GM12878 (cell line): ENCODE measurements at regions of chr6 and their contacts with region 1.

Region 1: DNA sequence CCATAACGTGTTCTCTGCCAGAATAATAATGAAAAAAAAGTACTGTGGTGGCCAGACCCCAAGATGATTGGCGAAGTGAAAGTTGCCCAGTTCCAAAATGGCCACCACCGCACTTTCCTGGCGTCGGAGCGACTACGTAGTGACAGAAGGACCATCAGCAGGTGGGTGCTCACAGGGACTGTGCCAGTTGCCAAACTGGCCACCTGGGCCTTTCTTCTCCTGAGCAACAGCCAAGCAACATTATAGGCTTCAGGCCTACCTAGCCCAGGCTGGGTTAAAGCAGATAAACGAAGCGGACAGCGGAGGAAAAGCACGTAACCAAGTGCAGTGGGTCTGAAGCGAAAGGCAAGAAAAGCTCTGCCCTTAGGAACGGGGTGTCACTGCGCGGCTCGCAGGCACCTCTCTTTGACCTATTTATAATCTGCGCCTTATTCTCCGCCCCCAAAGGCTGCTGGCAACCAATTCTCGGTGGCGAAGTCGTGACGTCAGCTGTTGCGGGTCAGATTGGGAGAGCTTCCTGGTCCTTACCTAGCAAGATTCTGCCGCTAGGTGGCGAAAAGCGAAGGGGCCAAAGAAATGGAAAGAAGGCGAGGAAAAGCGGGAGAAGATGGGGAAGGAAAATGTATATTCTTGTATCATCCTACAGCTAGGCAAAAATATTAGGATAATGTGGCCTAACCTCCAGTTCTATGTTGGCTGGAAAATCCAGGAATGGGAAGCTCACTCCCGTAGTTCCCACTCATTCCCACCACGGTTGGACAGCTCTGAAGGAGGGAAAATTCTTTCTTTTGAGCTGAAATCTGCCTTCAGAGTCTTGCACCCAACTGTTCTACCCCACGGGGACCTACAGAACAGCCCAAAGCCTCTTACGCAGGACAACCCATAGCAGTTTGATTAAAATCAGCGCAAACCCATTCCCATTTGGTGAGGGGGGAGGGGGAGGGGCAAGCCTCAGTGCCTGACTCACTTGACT is 6.9 kb upstream of the MOG start:
- DNase-seq: peak; percentile 89
- ATAC-seq: peak; percentile 97
- H3K4me3 ChIP-seq: peak overlapping the region; percentile 74
- H3K27ac ChIP-seq: peak overlapping the region; percentile 75
- H3K4me1 ChIP-seq: no peaks in the 10 kb centered on the region
- H3K27me3 ChIP-seq: no peaks in the 10 kb centered on the region
- CTCF ChIP-seq: peak; percentile 90 to 98 (median 96)
- EP300 ChIP-seq: peak in 1 of 2 experiments; percentile 17; a peak in 1 of 4 replicates
- POLR2A ChIP-seq: peak; percentile 91
- RAD21 ChIP-seq: 0 out of 2 replicates have a peak, but pooled peaks have one; percentile 19

Region 2: GRCh38 chr6:28838634-28839442 is 811.1 kb before region 1 on chr6:
- CTCF ChIA-PET with region 1: interaction called, 11 read pairs
- POLR2A ChIA-PET with region 1: no interaction called
- RAD21 ChIA-PET with region 1: no interaction called
- SMC1A ChIA-PET with region 1: interaction called, 3 read pairs
- in situ Hi-C with region 1: no loop called
- intact Hi-C with region 1: no loop called
- DNase-seq: peak; percentile 40
- ATAC-seq: peak; percentile 88
- H3K4me3 ChIP-seq: peak overlapping the region; percentile 70
- H3K27ac ChIP-seq: no peak overlapping the region
- H3K4me1 ChIP-seq: no peaks in the 10 kb centered on the region
- H3K27me3 ChIP-seq: peaks cover 0 to 2% of the 10 kb centered on the region in 2 experiments; a peak in 1 of 4 replicates
- CTCF ChIP-seq: peak; percentile 63 to 67 (median 66)
- EP300 ChIP-seq: no peak
- POLR2A ChIP-seq: no peak
- RAD21 ChIP-seq: 0 out of 2 replicates have a peak, but pooled peaks have one; percentile 15

Region 3: DNA sequence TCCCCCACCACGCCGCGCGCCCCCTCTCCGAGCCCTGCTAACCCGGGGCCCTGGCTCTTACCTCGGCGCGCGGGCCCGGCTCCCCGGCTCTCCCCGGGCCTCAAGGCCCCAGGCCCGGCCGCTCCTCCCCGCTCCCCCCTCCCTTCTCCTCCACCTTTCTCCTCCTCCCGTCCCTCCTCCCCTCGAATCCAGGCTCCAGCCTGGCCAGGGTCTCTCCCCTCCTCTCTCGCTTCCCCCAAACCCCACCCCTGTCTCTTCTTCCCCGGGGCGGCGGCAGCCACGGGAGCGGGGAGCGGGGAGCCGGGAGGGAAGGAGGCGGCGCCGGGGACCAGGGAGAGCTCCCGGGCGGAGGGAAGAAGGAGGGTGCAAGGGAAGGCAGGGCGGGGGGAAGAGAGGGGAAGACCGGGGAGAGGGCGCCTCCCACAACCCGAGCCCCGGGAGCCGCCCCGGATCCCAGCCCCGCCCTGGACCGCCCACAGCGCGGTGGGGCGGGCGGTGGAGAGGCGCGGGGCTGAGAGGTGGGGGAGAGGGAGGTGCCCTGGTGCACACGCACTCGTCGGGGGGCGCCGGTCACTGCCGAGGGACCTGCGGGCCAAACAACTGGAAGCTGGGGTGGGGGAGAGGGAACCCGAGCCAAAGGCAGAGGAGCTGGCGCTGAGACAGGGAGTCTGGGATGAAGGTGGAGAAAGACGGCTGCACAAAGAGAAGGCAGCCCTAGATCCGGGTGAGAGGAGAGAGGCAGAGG is 17.0 kb before region 1 on chr6 and contains the start of gene GABBR1:
- CTCF ChIA-PET with region 1: interaction called, 97 read pairs
- POLR2A ChIA-PET with region 1: interaction called, 4 read pairs
- RAD21 ChIA-PET with region 1: no interaction called
- SMC1A ChIA-PET with region 1: interaction called, 6 read pairs
- in situ Hi-C with region 1: no loop called
- intact Hi-C with region 1: no loop called
- DNase-seq: no peak
- ATAC-seq: peak; percentile 90
- H3K4me3 ChIP-seq: peak within 1 kb of the TSS; percentile 91
- H3K27ac ChIP-seq: peak within 1 kb of the TSS; percentile 17; the same call in 1 of the 2 replicates
- H3K4me1 ChIP-seq: peaks cover 16% of the 10 kb centered on the region
- H3K27me3 ChIP-seq: no peaks in the 10 kb centered on the region
- CTCF ChIP-seq: no peak
- EP300 ChIP-seq: no peak
- POLR2A ChIP-seq: 0 out of 2 replicates have a peak, but pooled peaks have one; percentile 33
- RAD21 ChIP-seq: no peak
- polyA plus RNA-seq, gene GABBR1: 0.11 to 0.37 TPM

Region 4: DNA sequence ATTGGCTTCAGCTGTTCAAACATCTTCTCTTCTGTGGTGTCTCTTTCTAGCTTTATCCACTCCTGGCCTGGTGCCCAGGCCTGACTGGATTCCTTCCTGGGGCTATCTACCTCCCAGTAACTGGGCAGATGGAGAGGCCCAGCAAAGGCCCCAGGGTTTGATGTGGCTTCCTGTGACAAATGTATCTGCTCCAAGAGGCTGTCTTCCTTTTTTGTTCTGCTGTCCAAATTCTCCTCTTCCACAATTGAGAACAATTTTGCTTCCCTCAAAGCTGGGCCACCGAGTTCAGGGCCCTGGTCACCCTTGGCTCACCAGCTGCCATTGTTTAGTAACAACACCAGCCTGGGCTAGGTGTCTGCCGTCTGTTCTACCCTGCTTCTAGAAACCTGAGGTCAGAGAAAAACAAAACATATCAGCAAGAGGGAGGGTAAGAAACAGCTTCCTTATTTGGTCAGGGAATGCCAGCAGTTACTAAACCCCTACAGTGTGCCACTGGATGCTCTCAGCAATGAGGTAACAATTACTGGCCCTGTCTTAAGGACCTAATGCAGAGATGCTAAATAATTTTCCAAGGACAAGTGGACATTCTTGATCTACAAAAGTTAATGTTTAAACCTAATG is 27.1 kb after region 1 on chr6:
- CTCF ChIA-PET with region 1: interaction called, 24 read pairs
- POLR2A ChIA-PET with region 1: interaction called, 5 read pairs
- RAD21 ChIA-PET with region 1: no interaction called
- SMC1A ChIA-PET with region 1: interaction called, 6 read pairs
- in situ Hi-C with region 1: no loop called
- intact Hi-C with region 1: no loop called
- DNase-seq: no peak
- ATAC-seq: peak; percentile 34; the same call in 2 of the 3 replicates
- H3K4me3 ChIP-seq: no peak overlapping the region
- H3K27ac ChIP-seq: no peak overlapping the region
- H3K4me1 ChIP-seq: peaks cover 3% of the 10 kb centered on the region; the same call in 1 of the 2 replicates
- H3K27me3 ChIP-seq: 0 out of 4 replicates have a peak, but pooled peaks cover 0 to 2% of the 10 kb centered on the region in 2 experiments
- CTCF ChIP-seq: no peak
- EP300 ChIP-seq: no peak
- POLR2A ChIP-seq: no peak
- RAD21 ChIP-seq: no peak

Region 5: DNA sequence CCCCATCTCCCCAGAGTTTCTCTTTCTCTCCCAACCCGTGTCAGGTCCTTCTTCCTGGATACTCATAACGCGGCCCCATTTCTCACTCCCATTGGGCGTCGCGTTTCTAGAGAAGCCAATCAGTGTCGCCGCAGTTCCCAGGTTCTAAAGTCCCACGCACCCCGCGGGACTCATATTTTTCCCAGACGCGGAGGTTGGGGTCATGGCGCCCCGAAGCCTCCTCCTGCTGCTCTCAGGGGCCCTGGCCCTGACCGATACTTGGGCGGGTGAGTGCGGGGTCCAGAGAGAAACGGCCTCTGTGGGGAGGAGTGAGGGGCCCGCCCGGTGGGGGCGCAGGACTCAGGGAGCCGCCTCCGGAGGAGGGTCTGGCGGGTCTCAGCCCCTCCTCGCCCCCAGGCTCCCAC is 73.3 kb after region 1 on chr6 and contains the start of gene HLA-F:
- CTCF ChIA-PET with region 1: interaction called, 21 read pairs
- POLR2A ChIA-PET with region 1: interaction called, 9 read pairs
- RAD21 ChIA-PET with region 1: no interaction called
- SMC1A ChIA-PET with region 1: interaction called, 4 read pairs
- in situ Hi-C with region 1: no loop called
- intact Hi-C with region 1: no loop called
- DNase-seq: peak; percentile 92
- ATAC-seq: peak; percentile 89
- H3K4me3 ChIP-seq: peak within 1 kb of the TSS; percentile 98
- H3K27ac ChIP-seq: peak within 1 kb of the TSS; percentile 99
- H3K4me1 ChIP-seq: peaks cover 15% of the 10 kb centered on the region
- H3K27me3 ChIP-seq: no peaks in the 10 kb centered on the region
- CTCF ChIP-seq: 0 out of 6 replicates have a peak, but pooled peaks of 1 of the 3 experiments have one; percentile 5
- EP300 ChIP-seq: 0 out of 4 replicates have a peak, but pooled peaks of 1 of the 2 experiments have one; percentile 27
- POLR2A ChIP-seq: peak; percentile 79
- RAD21 ChIP-seq: no peak
- polyA plus RNA-seq, gene HLA-F: 30.1 to 107 TPM

Region 6: DNA sequence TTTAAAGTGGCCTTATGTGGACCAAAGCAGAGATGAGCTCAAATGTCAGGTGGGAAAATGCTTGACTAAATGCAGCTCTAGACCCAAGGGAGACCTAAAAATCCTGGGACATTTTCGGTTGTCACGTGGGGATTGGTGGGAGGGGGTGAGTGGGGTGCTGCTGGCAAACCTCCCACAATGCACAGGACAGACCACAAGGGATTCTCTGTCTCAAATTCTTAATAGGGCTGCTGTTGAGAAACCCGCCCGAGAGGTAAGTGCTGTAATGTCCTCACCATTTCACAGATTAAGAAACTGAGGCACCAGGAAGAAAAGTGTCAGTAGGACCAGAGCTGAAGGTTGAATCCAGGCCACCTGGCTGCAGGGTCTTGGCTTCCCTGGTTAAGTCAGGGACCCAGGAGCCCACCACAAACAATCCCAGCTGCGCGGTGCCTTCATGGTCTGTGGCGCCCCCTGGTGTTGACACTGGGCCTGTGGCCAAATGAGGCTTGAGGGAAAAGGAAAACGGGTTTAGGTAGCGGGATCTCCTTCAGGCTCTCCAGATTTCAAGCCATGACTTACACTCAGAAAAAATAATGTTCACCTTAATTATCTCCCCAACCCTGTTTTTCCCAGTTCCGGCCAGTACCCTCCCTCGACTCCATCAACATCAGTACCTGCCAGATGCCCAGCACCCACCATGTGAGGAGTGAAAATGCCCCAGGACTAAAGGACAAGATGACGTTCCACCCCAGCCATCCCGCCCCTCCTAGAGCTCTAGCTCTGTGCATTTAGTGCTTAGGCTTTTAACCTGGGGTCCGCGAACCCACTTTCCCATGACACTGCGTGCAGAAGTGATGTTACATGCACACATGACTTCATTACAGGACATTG is 184.8 kb after region 1 on chr6:
- CTCF ChIA-PET with region 1: interaction called, 35 read pairs
- POLR2A ChIA-PET with region 1: no interaction called
- RAD21 ChIA-PET with region 1: interaction called, 7 read pairs
- SMC1A ChIA-PET with region 1: interaction called, 14 read pairs
- in situ Hi-C with region 1: no loop called
- intact Hi-C with region 1: loop called (anchors 2 kb)
- DNase-seq: no peak
- ATAC-seq: peak; percentile 79
- H3K4me3 ChIP-seq: no peak overlapping the region
- H3K27ac ChIP-seq: no peak overlapping the region
- H3K4me1 ChIP-seq: no peaks in the 10 kb centered on the region
- H3K27me3 ChIP-seq: peaks cover 0 to 5% of the 10 kb centered on the region in 2 experiments; a peak in 2 of 4 replicates
- CTCF ChIP-seq: peak; percentile 65 to 78 (median 70)
- EP300 ChIP-seq: no peak
- POLR2A ChIP-seq: no peak
- RAD21 ChIP-seq: peak; percentile 78